ENCODE measurements at regions of chr12 and their contacts with region 1.

Region 1: GRCh38 chr12:128551266-128551665 is 272.5 kb downstream of the SLC15A4 start:
- DNase-seq: no peak
- H3K4me3 ChIP-seq: no peak overlapping the region
- H3K27ac ChIP-seq: no peak overlapping the region
- H3K4me1 ChIP-seq: no peaks in the 10 kb centered on the region
- H3K27me3 ChIP-seq: no peaks in the 10 kb centered on the region
- CTCF ChIP-seq: no peak

Region 2: GRCh38 chr12:127223731-127224130 is 1327.5 kb before region 1 on chr12:
- intact Hi-C with region 1: loop called (anchors 5 kb)
- DNase-seq: no peak
- H3K4me3 ChIP-seq: no peak overlapping the region
- H3K27ac ChIP-seq: no peak overlapping the region
- H3K4me1 ChIP-seq: no peaks in the 10 kb centered on the region
- H3K27me3 ChIP-seq: no peaks in the 10 kb centered on the region
- CTCF ChIP-seq: no peak

Region 3: GRCh38 chr12:128531170-128531569 is 20.1 kb before region 1 on chr12:
- intact Hi-C with region 1: loop called (anchors 2 kb)
- DNase-seq: no peak
- H3K4me3 ChIP-seq: no peak overlapping the region
- H3K27ac ChIP-seq: no peak overlapping the region
- H3K4me1 ChIP-seq: no peaks in the 10 kb centered on the region
- H3K27me3 ChIP-seq: no peaks in the 10 kb centered on the region
- CTCF ChIP-seq: no peak